ENCODE measurements at regions of chr3 and their contacts with region 1.

Region 1: GRCh38 chr3:11638495-11639358 is 5.0 kb downstream of the VGLL4 start:
- DNase-seq: no peak
- H3K4me3 ChIP-seq: peak overlapping the region; percentile 92
- CTCF ChIP-seq: no peak

Region 2: DNA sequence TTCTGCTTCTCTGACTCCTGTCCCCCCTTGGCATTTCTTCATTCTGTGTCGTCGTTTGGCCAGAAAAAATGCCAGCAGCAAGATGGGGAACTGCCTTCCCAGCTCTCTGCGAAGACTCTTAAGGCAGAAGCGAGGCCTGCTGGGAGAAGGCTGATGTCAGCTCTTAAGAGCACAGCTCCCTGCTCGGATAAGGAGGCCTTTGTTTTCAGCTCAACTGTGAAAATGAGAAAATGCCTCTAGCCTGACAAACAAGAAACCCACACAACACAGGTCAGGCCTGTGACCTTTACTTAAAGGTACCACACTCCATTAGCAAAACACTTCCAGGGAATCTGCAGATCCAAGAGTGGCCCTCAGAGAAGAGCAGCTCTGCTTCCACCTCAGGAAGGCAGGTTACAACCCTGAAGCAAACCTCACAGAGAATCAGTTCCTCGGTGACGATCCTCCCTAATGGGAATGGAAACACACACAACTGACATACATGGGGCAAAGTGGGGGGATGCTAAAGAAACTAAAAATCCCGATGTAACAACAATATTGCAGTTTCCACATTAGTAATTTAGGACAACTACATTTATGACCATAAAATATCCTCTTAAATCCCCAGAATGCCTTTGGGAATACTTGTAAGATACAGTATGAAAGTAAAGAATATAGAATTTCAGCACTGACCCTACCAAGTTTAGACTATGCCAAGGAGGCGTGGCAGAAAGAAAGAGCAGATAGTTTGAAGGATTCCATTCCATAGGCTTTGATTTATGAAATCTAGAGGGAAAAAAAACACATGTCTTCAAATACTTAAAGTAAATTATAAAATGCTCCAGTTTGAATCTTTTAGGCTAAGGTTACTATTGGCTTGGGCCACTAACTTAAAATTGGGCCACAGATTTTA is 47.1 kb before region 1 on chr3:
- in situ Hi-C with region 1: no loop called
- DNase-seq: peak; percentile 79
- H3K4me3 ChIP-seq: no peak overlapping the region
- CTCF ChIP-seq: no peak

Region 3: DNA sequence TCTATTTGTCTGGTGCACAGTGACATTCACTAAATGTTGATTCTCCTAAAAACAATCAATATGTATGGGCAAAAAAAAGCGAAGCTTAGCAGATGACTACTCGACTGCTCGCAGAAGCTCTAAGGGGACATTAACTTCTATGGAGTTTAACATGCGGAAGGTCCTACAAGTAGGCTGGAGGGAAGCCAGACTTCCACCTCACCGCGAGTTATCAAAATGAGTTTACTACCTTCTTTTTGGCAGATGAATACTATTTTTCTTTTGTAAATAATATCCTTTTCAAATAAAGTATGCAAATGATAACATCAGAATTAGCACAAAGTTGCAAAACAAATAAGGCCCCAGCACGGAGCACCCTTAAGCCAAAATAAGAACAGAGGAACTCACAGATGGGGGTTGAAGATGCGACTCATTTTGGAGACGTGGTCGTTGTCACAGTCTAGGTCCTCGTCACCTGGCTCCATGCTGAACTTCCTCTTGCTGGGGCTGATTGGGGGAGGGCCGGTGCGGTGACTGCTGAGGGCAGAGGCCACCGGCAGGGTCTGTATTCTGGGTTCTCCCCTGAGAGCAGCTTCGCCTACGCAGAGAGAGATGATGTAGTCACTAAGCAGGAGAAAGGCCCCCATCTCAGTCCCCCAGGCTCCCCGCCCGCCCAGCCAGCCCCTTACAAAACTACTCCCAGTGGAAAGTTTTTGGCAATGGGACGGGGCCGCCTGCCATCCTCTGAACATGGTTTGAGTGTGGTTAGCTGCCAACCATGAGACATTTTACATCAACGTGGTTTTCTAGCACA is 37.1 kb before region 1 on chr3:
- in situ Hi-C with region 1: loop called (anchors 5 kb)
- DNase-seq: no peak
- H3K4me3 ChIP-seq: no peak overlapping the region
- CTCF ChIP-seq: no peak

Region 4: DNA sequence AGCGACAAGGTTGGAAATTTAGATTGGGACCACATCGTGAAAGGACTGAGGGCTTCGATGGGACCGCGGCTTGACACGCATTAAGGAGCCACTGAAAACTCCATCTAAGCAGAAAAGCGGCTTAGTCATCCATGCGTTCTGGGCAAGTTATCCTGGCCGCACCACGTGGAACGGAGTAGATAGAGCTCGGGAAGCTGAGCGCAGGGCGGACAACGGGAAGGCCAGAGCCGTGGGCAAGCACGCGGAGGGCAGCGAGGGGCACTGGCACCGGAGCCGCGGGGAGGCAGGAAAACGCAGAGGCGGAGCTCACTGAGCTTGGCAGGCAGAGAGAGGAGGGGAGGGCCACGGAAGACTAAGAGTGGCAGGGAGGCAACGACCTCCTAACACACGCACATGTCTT is 66.3 kb after region 1 on chr3:
- in situ Hi-C with region 1: no loop called
- DNase-seq: no peak
- H3K4me3 ChIP-seq: no peak overlapping the region
- CTCF ChIP-seq: no peak

Region 5: DNA sequence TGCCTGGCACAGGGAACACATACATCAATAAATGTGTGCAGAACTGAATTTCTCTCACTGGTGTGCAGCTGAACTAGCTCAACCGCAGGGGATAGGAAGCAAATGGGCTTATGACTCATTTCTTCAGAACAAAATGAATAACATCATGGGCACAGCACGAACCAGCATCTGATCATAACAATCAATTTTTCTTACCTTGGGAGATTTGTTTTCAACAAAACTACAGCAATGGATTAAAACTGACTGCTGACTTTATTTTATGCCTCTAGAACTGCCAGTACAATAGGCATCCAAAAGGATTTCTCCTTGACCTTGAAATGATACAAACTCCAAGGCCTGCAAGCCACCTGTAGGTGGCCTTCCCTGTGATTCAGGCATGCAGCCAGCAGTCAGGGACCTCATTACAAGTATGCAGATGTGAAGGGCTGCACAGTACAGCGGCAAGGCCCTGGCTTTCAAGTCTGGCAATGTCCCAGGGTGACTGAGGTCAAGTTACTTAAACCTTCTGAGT is 181.9 kb after region 1 on chr3:
- in situ Hi-C with region 1: no loop called
- DNase-seq: peak; percentile 42
- H3K4me3 ChIP-seq: no peak overlapping the region
- CTCF ChIP-seq: peak; percentile 14